Posterior vena cava (tissue), 2 donors: ENCODE measurements at regions of chr18 and their contacts with region 1.

Region 1: GRCh38 chr18:22174341-22175145 is 5.2 kb downstream of the GATA6 start:
- DNase-seq: no peak

Region 2: DNA sequence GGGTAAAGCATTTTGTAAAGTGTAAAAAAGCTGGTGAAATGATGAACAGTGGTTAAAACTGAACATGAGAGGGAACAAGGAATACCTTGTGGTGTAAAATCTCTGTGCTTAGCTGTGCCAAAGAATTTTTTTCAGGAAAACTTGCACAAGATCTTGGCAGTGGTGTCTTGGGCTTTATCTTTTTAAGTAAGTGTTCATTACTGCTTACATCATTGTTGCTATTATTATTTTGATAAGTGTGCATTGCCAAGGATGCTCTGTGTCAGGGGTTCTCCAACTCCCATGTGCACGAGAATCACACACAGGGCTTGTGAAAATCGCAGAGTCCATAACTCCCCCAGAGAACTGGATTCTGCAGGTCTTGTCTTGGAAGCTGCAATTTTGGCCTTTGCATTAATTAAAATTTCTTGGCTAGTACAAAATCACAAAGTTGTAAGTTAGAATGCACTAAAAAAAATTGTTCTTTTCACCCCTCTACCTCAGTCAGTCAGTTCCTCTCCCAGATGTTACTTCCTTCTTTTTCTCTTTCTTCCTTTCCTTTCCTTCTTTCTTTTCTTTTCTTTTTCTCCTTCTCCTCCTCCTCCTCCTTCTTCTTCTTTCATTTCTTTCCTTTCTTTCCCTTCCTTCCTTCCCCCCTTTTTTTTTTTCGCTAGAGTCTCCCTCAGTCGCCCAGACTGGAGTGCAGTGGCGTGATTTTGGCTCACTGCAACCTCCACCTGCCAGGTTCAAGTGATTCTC is 32.6 kb after region 1 on chr18:
- intact Hi-C with region 1: no loop called
- DNase-seq: no peak

Region 3: DNA sequence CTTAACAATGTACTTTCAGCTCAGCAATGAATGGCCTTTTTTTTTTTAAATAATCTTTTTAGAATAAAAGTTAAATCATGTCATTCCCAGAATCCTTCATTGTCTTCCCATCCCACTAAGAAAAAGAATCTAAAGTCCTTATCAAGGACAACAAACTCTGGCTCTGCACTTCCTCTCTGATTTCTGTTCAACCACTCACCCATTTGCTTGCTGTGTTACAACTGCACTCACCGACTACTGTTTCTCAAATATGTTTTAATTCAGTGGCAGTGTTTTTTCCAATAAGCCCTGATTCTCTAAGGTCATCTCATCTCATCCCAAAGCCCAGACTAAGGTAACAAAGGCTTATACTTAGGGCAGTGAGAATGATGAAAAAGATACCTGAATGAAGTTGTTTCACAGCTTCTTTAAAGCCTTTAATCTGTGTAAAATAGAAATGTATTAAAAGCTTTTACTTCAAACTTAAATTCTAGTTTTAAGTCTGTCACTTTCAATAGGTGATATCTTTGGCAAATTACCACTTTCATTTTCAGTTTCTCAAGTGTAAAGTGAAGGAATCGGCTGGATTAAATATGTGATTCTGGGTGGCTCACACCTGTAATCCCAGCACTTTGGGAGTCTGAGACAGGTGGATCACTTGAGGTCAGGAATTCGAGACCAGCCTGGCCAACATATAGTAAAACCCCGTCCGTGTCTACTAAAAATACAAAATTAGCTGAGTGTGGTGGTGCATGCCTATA is 846.2 kb after region 1 on chr18:
- intact Hi-C with region 1: loop called in 1 of 2 experiments (anchors 5 kb)
- DNase-seq: no peak